Vagina (tissue), 2 donors: ENCODE measurements at regions of chr9 and their contacts with region 1.

Region 1: GRCh38 chr9:73114958-73115357 is 36.7 kb upstream of the ANXA1 start:
- DNase-seq: no peak
- H3K4me3 ChIP-seq: no peak overlapping the region
- H3K27ac ChIP-seq: no peak overlapping the region
- H3K4me1 ChIP-seq: no peaks in the 10 kb centered on the region
- H3K27me3 ChIP-seq: no peaks in the 10 kb centered on the region
- CTCF ChIP-seq: no peak
- POLR2A ChIP-seq: no peak

Region 2: DNA sequence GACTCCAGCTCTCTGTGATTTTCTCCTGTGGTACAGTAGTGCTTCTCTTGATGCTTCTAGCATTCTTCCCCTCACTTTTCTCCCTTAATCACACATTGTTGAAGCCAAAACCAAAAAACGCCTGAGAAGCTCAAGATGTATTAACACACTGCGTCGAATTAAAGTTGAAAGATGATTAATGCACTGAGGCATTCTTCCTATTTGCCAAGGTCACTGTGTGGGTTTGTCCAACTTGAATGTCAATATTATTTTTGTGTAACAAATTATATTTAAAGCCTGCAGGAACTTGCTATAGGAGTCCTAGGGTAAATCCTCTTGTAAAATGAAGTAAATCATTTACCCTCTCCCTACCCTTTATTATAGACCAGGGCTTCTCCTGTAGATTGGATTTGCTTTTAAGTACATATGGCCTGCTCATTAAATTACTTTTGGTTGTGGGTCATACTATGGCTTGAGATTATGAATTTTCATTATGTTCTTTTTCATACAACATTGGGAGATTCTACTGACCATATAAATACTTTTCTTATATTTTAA is 897.6 kb before region 1 on chr9:
- intact Hi-C with region 1: no loop called
- DNase-seq: no peak
- H3K4me3 ChIP-seq: no peak overlapping the region
- H3K27ac ChIP-seq: no peak overlapping the region
- H3K4me1 ChIP-seq: no peaks in the 10 kb centered on the region
- H3K27me3 ChIP-seq: no peaks in the 10 kb centered on the region
- CTCF ChIP-seq: no peak
- POLR2A ChIP-seq: no peak

Region 3: DNA sequence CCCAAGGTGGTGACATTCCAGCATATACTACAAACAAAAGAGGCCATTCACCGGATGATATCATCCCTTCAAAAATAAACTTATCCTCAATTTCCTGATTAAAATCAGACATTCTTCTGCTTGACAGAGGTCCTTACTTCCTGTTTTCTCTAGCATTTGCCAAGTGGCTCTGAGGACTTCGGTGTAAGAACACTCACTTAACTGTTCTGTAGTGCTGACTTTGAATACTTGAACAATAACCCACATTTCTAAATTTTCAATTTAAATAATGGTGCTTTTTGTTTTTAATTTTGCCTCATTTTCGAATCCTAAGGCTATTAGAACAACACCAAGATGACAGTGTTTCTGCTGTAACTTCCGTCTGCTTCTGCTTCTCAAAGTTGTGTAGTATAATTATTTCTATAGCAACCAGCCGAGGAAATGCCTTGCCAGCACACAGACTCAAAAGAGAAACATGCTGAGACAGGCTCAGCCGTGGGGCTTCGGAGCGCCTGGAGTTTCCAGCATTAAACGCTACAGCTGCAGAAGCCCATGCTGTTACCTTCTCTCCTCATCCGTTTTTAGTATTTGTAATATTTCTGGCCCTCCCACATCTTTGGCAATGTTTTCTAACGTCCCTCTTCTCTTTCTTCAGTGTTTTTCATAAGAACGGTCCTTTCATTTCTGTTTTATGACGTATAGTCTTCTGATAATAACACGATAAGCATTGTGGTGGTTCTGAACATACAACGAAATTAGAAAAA is 17.2 kb after region 1 on chr9:
- intact Hi-C with region 1: no loop called
- DNase-seq: no peak
- H3K4me3 ChIP-seq: peak overlapping the region; percentile 40 to 47
- H3K27ac ChIP-seq: peak overlapping the region; percentile 84
- H3K4me1 ChIP-seq: peaks cover 20% of the 10 kb centered on the region
- H3K27me3 ChIP-seq: no peaks in the 10 kb centered on the region
- CTCF ChIP-seq: no peak
- POLR2A ChIP-seq: peak in 1 of 2 donors; percentile 18

Region 4: DNA sequence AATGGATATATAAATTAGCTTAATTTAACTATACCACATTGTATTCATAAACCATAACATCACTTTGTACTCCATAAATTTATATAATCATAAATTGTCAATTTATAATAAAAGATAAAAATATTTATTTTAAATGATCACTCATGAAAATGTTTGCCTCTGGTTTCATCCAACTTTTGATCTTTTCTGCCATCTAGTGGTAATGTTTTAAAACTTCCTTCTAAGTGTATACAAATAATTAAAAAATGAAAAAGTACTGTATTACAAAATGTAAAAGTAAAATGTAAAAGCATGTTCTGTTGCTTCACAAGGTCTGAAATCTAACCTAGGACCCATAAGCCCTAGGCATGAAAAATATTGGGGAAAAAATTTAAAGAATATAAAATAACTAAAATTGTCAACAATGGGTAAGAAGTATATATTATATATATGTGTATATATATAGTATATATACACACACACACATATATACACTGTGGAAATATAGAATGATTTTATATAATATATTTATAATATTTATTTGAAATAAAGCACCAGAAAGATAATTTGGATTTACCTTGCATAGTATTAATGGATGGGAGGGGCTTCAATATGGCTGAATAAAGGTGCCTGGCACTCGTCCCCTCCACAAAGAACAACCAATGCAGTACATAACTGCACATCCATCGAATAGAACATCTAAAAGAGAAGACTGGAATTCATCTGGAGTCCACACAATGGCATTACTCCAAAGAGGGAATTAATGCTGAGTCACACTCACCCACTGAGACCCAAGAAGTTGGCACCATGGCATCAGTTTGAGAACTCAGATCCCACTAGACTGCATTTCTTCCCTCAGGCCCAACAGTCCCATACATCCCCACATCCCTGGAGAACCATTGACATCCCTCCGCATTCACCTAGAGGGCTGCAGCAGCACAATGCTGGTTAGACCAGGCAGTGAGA is 69.2 kb after region 1 on chr9:
- intact Hi-C with region 1: loop called (anchors 5 kb)
- DNase-seq: no peak
- H3K4me3 ChIP-seq: no peak overlapping the region
- H3K27ac ChIP-seq: no peak overlapping the region
- H3K4me1 ChIP-seq: peaks cover 9% of the 10 kb centered on the region
- H3K27me3 ChIP-seq: no peaks in the 10 kb centered on the region
- CTCF ChIP-seq: peak in 2 of 3 experiments; percentile 21 to 55
- POLR2A ChIP-seq: no peak